ENCODE measurements at regions of chrX and their contacts with region 1.

Region 1: DNA sequence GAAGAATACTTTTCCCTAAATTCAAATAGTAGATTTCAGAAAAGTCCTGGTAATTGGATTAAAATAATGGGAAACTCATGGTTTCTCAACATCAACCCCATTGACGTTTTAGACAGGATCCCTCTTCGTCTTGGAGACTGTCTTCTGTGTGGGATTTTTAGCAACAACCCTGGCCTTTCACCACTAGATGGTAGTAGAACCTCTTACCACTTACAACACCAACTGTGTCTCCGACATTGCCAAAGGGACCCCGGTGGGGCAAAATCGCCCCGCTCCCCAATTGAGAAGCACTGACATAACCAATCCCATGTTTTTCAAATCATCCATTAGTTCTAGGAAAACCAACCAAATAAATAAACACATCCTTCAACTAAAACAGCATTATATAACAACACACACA is 16.9 kb upstream of the ANOS1 start:
- DNase-seq: no peak
- ATAC-seq: no peak
- H3K4me3 Mint-ChIP-seq: no peak overlapping the region
- H3K27ac Mint-ChIP-seq: no peak overlapping the region
- H3K4me1 Mint-ChIP-seq: no peaks in the 10 kb centered on the region
- H3K27me3 Mint-ChIP-seq: peaks cover 4% of the 10 kb centered on the region

Region 2: GRCh38 chrX:8126648-8127047 is 622.2 kb before region 1 on chrX:
- CTCF ChIA-PET with region 1: no interaction called
- POLR2A ChIA-PET with region 1: no interaction called
- intact Hi-C with region 1: no loop called
- DNase-seq: no peak
- ATAC-seq: no peak
- H3K4me3 Mint-ChIP-seq: no peak overlapping the region
- H3K27ac Mint-ChIP-seq: no peak overlapping the region
- H3K4me1 Mint-ChIP-seq: no peaks in the 10 kb centered on the region
- H3K27me3 Mint-ChIP-seq: no peaks in the 10 kb centered on the region

Region 3: GRCh38 chrX:9708904-9709553 is 960.2 kb after region 1 on chrX:
- CTCF ChIA-PET with region 1: no interaction called
- POLR2A ChIA-PET with region 1: no interaction called
- intact Hi-C with region 1: loop called in 1 of 2 experiments (anchors 2 kb)
- DNase-seq: peak; percentile 84
- ATAC-seq: peak; percentile 78
- H3K4me3 Mint-ChIP-seq: no peak overlapping the region
- H3K27ac Mint-ChIP-seq: no peak overlapping the region
- H3K4me1 Mint-ChIP-seq: peaks cover 6% of the 10 kb centered on the region
- H3K27me3 Mint-ChIP-seq: no peaks in the 10 kb centered on the region